ENCODE measurements at regions of chr5 and their contacts with region 1.

Region 1: DNA sequence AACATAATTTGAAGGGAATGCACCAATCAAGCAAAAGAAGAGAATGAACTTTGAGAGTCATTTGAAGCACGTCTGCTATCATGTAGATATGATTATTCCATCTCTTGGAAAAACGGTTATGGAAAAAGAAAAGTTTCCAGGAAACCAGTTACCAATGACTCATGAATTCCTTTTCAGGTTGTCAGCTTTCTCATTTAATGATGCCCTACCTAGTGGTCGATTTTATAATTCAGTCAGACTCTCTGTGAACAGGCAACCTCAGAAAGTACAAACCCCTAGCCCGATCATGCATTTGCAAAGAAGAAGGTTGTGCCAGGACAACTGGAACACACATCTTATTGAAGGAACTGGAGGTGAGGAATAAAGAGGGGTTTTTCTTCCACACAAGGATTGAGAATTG is 355.1 kb upstream of the GRIA1 start:
- DNase-seq: no peak
- ATAC-seq: no peak
- H3K4me3 ChIP-seq: no peak overlapping the region
- H3K27ac ChIP-seq: no peak overlapping the region
- H3K4me1 ChIP-seq: no peaks in the 10 kb centered on the region
- H3K27me3 ChIP-seq: no peaks in the 10 kb centered on the region
- CTCF ChIP-seq: no peak
- POLR2A ChIP-seq: no peak
- RAD21 ChIP-seq: no peak

Region 2: DNA sequence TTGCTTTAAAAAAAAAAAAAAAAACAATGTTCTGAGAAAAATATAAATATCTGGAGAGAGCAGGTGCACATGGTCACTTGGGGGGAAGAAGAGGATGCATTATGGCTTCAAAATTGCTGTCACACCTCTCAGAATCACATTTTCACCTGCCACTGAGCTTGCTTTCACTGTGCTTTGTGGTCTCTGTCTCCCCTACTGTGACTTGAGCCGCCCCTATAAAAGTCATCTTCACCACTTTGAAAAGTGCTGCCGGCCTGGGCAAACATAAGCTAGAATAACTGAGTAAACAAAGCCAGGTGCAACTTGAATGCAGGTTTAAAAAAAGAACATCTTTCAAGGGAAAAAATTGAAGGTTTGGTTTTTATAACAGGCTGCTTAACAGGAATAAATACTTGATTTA is 13.0 kb before region 1 on chr5:
- CTCF ChIA-PET with region 1: no interaction called
- POLR2A ChIA-PET with region 1: no interaction called
- RAD21 ChIA-PET with region 1: no interaction called
- intact Hi-C with region 1: loop called (anchors 1 kb)
- DNase-seq: no peak
- ATAC-seq: no peak
- H3K4me3 ChIP-seq: no peak overlapping the region
- H3K27ac ChIP-seq: no peak overlapping the region
- H3K4me1 ChIP-seq: no peaks in the 10 kb centered on the region
- H3K27me3 ChIP-seq: no peaks in the 10 kb centered on the region
- CTCF ChIP-seq: no peak
- POLR2A ChIP-seq: no peak
- RAD21 ChIP-seq: no peak

Region 3: DNA sequence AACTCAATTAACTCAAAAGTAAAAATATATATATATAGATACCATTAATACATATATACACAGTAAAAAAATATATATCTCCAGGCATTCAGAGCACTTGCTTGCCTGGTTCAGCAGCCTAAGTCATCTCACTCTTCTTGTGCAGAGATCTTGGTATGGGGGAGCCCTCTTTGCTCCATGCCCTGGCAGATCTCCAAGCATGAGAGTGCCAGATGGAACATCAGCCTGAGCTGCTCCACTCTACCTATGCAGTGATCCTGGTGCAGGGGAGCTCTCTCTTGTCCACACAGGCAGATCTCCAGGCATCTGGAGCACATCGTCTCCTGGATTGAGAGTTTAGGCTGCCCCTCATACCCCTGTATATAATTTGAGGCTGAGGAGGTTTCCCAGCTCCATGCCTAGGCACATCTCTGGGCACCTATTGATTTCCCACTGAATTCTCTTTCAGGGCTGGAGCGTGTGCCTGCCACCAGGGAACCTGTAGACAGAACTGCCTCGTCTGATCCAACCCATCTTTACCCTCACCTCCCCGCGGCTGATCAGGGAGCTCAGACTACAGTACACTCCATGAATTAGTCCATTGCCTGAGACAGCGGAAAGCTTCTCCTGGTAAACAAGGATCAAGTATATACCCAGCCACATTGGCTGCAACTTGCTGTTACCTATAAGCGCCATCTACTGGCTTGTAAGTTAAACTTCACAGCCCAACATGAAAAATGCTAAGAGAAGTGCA is 12.6 kb after region 1 on chr5:
- CTCF ChIA-PET with region 1: no interaction called
- POLR2A ChIA-PET with region 1: no interaction called
- RAD21 ChIA-PET with region 1: no interaction called
- intact Hi-C with region 1: no loop called
- DNase-seq: no peak
- ATAC-seq: peak; percentile 72
- H3K4me3 ChIP-seq: no peak overlapping the region
- H3K27ac ChIP-seq: no peak overlapping the region
- H3K4me1 ChIP-seq: no peaks in the 10 kb centered on the region
- H3K27me3 ChIP-seq: no peaks in the 10 kb centered on the region
- CTCF ChIP-seq: peak; percentile 6 to 54 (median 43); a peak in 4 of 6 replicates
- POLR2A ChIP-seq: no peak
- RAD21 ChIP-seq: peak; percentile 35; the same call in 1 of the 2 replicates